Caco-2 (cell line): ENCODE measurements at regions of chr19 and their contacts with region 1.

Region 1: GRCh38 chr19:13731147-13731964 is 33.0 kb upstream of the MRI1 start:
- DNase-seq: peak; percentile 92 to 95
- H3K4me3 ChIP-seq: peak overlapping the region; percentile 36
- H3K4me3 Mint-ChIP-seq: peak overlapping the region; percentile 78
- H3K27ac Mint-ChIP-seq: peak overlapping the region; percentile 68
- H3K4me1 ChIP-seq: peaks cover 5% of the 10 kb centered on the region; the same call in 1 of the 2 replicates
- H3K4me1 Mint-ChIP-seq: no peaks in the 10 kb centered on the region
- H3K27me3 ChIP-seq: no peaks in the 10 kb centered on the region
- H3K27me3 Mint-ChIP-seq: no peaks in the 10 kb centered on the region
- CTCF ChIP-seq: no peak

Region 2: DNA sequence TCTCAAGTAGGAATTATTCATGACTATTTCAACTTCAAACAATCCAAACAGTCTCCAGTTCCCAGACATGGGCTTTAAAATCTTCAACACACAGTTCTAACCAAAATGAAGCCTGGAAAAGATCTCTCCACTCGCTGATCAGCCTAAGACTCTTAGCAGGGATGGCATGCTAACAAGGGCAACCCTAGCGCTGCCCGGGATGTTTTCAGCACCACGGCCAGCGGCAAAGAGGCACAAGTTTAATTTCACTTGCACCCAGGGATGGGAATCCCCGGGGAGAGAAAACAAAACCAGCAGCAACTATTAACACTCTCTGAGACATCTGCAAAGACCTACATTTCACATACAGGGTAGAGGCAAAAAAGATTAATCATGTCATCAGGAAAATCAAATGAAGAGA is 268.1 kb before region 1 on chr19:
- CTCF ChIA-PET with region 1: no interaction called
- POLR2A ChIA-PET with region 1: no interaction called
- intact Hi-C with region 1: no loop called
- DNase-seq: peak in 1 of 2 experiments; percentile 36
- H3K4me3 ChIP-seq: no peak overlapping the region
- H3K4me3 Mint-ChIP-seq: no peak overlapping the region
- H3K27ac Mint-ChIP-seq: no peak overlapping the region
- H3K4me1 ChIP-seq: no peaks in the 10 kb centered on the region
- H3K4me1 Mint-ChIP-seq: no peaks in the 10 kb centered on the region
- H3K27me3 ChIP-seq: no peaks in the 10 kb centered on the region
- H3K27me3 Mint-ChIP-seq: peaks cover 7% of the 10 kb centered on the region
- CTCF ChIP-seq: no peak

Region 3: DNA sequence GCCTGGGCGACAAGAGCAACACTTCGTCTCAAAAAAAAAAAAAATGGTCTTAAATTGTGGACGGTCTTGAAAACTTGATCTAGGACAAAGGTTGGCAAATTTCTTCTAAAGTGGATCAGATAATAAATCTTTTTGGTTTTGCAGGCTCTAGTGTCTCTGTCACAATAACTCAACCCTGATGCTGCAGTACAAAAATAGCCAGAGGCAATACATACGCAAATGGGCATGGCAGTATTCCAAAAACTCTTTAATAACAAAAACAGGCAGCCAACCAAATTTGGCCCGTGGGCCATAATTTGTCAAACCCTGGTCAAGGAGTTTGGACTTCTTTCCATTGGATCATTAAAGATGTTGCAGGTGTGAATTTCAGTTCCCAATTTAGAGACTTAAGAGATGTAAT is 60.5 kb before region 1 on chr19:
- CTCF ChIA-PET with region 1: no interaction called
- POLR2A ChIA-PET with region 1: no interaction called
- intact Hi-C with region 1: no loop called
- DNase-seq: no peak
- H3K4me3 ChIP-seq: no peak overlapping the region
- H3K4me3 Mint-ChIP-seq: no peak overlapping the region
- H3K27ac Mint-ChIP-seq: no peak overlapping the region
- H3K4me1 ChIP-seq: no peaks in the 10 kb centered on the region
- H3K4me1 Mint-ChIP-seq: no peaks in the 10 kb centered on the region
- H3K27me3 ChIP-seq: no peaks in the 10 kb centered on the region
- H3K27me3 Mint-ChIP-seq: no peaks in the 10 kb centered on the region
- CTCF ChIP-seq: no peak

Region 4: DNA sequence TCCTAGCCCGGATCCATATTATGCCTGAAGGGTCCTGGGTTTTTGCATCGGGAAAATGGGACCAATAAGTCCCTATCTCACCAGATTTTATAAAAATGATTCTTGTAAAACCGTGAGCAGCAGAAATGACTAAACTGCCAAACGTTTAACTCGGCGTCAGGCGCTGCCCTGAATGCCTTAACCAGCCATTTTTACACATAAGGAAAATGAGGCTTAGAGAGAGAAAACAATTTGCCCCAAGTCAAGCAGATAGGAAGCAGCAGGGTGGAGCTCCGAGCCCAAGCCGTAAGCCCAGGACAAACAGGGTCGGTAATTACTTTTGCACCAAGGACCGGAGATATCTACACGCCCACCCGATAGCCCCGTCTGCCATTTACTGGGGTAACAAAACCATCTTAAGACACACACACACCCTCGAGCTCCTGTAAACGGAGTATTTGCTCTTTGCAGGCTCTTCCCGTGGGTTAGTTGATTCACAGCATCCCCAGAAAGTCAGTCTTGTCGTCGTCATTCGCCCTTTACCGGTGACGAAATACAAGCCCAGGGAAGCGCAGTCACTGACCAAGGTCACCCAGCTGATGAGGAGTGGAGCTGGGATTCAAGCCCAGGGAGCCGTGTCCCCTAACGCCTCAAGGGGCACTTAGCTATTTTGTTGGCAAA is 16.9 kb after region 1 on chr19:
- CTCF ChIA-PET with region 1: interaction called, 5 read pairs
- POLR2A ChIA-PET with region 1: interaction called, 14 read pairs
- intact Hi-C with region 1: loop called (anchors 2 kb)
- DNase-seq: peak in 1 of 2 experiments; percentile 15
- H3K4me3 ChIP-seq: peak overlapping the region; percentile 64
- H3K4me3 Mint-ChIP-seq: peak overlapping the region; percentile 87
- H3K27ac Mint-ChIP-seq: peak overlapping the region; percentile 87
- H3K4me1 ChIP-seq: peaks cover 10% of the 10 kb centered on the region; the same call in 1 of the 2 replicates
- H3K4me1 Mint-ChIP-seq: no peaks in the 10 kb centered on the region
- H3K27me3 ChIP-seq: no peaks in the 10 kb centered on the region
- H3K27me3 Mint-ChIP-seq: no peaks in the 10 kb centered on the region
- CTCF ChIP-seq: no peak

Region 5: DNA sequence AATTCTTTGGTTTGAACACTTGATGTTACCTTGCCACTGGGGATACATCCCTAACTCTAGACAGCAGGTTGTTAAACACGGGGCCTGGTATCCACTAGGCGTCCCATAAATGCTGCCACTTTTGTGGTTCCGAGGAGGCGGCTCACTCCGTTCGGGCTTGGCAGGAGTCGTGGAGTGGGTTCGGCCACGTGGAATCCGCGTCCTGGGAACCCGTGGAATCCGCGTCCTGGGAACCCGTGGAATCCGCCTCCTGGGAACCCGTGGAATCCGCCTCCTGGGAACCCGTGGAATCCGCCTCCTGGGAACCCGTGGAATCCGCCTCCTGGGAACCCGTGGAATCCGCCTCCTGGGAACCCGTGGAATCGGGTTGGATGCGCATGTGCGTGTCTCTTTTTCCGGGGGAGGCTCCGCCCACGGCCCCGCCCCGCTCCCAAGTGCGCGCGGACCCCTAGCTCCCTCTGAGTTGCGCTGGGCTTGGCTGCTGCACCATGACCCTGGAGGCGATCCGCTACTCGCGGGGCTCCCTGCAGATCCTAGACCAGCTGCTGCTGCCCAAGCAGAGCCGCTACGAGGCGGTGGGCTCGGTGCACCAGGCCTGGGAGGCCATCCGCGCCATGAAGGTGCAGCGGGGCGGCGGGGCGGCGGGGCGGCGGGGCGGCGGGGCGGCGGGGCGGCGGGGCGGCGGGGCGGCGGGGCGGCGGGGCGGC is 32.9 kb after region 1 on chr19 and contains the start of gene MRI1:
- CTCF ChIA-PET with region 1: interaction called, 3 read pairs
- POLR2A ChIA-PET with region 1: interaction called, 3 read pairs
- intact Hi-C with region 1: loop called (anchors 1 kb)
- DNase-seq: peak; percentile 79 to 80
- H3K4me3 ChIP-seq: peak within 1 kb of the TSS; percentile 58
- H3K4me3 Mint-ChIP-seq: peak within 1 kb of the TSS; percentile 80
- H3K27ac Mint-ChIP-seq: peak within 1 kb of the TSS; percentile 57
- H3K4me1 ChIP-seq: peaks cover 4% of the 10 kb centered on the region; the same call in 1 of the 2 replicates
- H3K4me1 Mint-ChIP-seq: peaks cover 9% of the 10 kb centered on the region
- H3K27me3 ChIP-seq: no peaks in the 10 kb centered on the region
- H3K27me3 Mint-ChIP-seq: no peaks in the 10 kb centered on the region
- CTCF ChIP-seq: no peak
- total RNA-seq, gene MRI1: 23.3 and 25.7 TPM in 2 replicates